ENCODE measurements at regions of chr1 and their contacts with region 1.

Region 1: DNA sequence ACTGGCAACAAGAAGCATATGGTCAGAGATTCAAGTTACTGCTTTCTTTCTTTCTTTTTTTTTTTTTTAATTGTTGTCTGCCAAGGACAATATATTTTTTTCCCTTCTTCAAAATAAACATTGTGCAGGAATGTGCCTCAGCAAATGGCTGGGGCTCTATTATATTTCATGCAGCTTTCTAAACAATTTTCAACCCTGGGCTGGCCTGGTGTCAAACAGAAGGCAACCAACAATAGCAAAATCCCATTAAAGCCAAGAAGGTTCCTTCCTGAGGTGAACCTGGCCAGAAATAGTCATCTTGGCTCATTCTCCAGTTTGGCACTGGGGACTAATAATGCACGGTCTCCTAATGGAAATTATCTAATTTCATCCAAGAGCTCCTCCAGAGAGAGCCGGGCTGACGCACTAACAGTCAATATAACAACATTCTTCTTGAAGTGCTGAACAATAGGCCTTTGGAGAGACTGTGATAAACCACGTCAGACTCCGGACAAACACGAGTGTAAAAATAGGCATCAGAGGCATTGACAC is 35.7 kb upstream of the HLX start:
- DNase-seq: no peak
- H3K4me3 ChIP-seq: no peak overlapping the region
- H3K27me3 ChIP-seq: no peaks in the 10 kb centered on the region
- CTCF ChIP-seq: no peak

Region 2: DNA sequence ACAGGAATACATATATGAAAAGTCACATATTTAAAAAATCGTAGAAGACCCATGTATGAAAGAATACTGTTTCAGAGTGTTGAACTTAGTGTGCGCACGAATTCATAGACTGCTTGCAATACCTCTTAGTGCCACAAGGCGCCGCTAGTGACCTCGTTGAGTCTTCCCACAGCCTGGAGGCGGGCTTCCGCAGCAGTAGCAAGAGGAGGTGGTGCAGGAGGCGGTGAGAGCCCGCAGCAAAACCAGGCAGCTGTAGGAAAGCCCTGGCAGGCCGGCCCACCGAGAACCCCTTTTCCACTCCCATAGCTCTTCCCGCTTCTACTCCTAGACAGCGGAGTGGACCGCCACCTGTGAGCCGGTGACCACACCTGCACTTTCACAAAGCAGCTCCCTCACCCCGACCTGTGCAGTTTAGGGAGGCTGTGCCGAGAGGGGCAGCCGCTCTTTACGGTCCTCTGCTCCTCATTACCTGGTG is 33.3 kb before region 1 on chr1:
- CTCF ChIA-PET with region 1: interaction called, 11 read pairs
- POLR2A ChIA-PET with region 1: no interaction called
- DNase-seq: no peak
- H3K4me3 ChIP-seq: no peak overlapping the region
- H3K27me3 ChIP-seq: peaks cover 2% of the 10 kb centered on the region; the same call in 1 of the 2 replicates
- CTCF ChIP-seq: peak; percentile 96

Region 3: GRCh38 chr1:220833436-220833835 is 10.1 kb before region 1 on chr1:
- CTCF ChIA-PET with region 1: interaction called, 7 read pairs
- POLR2A ChIA-PET with region 1: interaction called, 16 read pairs
- DNase-seq: no peak
- H3K4me3 ChIP-seq: no peak overlapping the region
- H3K27me3 ChIP-seq: peaks cover 2% of the 10 kb centered on the region; the same call in 1 of the 2 replicates
- CTCF ChIP-seq: no peak